Heart right ventricle (tissue), 16 donors: ENCODE measurements at regions of chr20 and their contacts with region 1.

Region 1: GRCh38 chr20:8946036-8946940 is 122.6 kb upstream of the PLCB4 start:
- DNase-seq: no peak
- ATAC-seq: peak; percentile 47 to 86 (median 72)
- H3K4me3 ChIP-seq: no peak overlapping the region
- H3K27ac ChIP-seq: peak overlapping the region in 9 of 10 donors; percentile 0 to 75 (median 49)
- H3K4me1 ChIP-seq: peaks cover 2 to 42% (median 22%) of the 10 kb centered on the region in 9 donors
- H3K27me3 ChIP-seq: no peaks in the 10 kb centered on the region
- CTCF ChIP-seq: no peak

Region 2: DNA sequence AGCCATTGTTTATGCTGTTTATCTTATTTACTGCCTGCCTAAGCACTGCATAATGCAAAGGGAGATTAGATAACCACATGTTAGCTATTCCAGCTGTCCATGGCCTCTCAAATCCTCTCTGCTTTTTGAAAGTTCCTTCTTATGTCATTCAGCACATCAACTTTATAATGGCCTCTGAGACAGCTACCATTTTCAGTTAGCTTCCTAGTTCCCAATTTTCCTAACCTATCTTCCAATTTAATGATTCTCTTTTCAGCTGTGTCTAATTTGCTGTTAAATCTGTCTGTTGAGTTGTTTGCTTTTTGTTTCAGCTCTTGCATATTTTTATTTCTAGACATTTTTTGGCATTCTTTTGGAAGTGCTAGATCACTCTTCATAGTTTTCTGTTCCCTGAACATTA is 50.8 kb before region 1 on chr20:
- intact Hi-C with region 1: loop called in 1 of 10 experiments (anchors 5 kb)
- DNase-seq: no peak
- ATAC-seq: no peak
- H3K4me3 ChIP-seq: no peak overlapping the region
- H3K27ac ChIP-seq: no peak overlapping the region
- H3K4me1 ChIP-seq: peaks cover 0 to 14% (median 2%) of the 10 kb centered on the region in 9 donors
- H3K27me3 ChIP-seq: no peaks in the 10 kb centered on the region
- CTCF ChIP-seq: no peak

Region 3: GRCh38 chr20:9557411-9557810 is 611.1 kb after region 1 on chr20:
- intact Hi-C with region 1: no loop called
- DNase-seq: no peak
- ATAC-seq: no peak
- H3K4me3 ChIP-seq: no peak overlapping the region
- H3K27ac ChIP-seq: no peak overlapping the region
- H3K4me1 ChIP-seq: no peaks in the 10 kb centered on the region
- H3K27me3 ChIP-seq: peaks cover 0 to 40% (median 11%) of the 10 kb centered on the region in 7 donors
- CTCF ChIP-seq: no peak